Natural killer cell (primary cell): ENCODE measurements at regions of chr1 and their contacts with region 1.

Region 1: GRCh38 chr1:220733090-220733601 is 15.0 kb upstream of the MTARC2 start:
- DNase-seq: peak; percentile 68 to 84
- ATAC-seq: peak; percentile 91 to 97 (median 97)
- H3K4me3 ChIP-seq: no peak overlapping the region
- H3K4me3 Mint-ChIP-seq: peak overlapping the region; percentile 78
- H3K27ac ChIP-seq: no peak overlapping the region
- H3K27ac Mint-ChIP-seq: peak overlapping the region; percentile 24 to 71
- H3K4me1 ChIP-seq: peaks cover 8% of the 10 kb centered on the region
- H3K4me1 Mint-ChIP-seq: peaks cover 9 to 10% of the 10 kb centered on the region in 2 donors
- H3K27me3 ChIP-seq: no peaks in the 10 kb centered on the region
- H3K27me3 Mint-ChIP-seq: peaks cover 5 to 17% of the 10 kb centered on the region in 2 donors
- CTCF ChIP-seq: peak; percentile 78

Region 2: GRCh38 chr1:220217383-220217988 is 515.7 kb before region 1 on chr1:
- intact Hi-C with region 1: loop called (anchors 5 kb)
- DNase-seq: peak in 1 of 2 donors; percentile 21
- ATAC-seq: no peak
- H3K4me3 ChIP-seq: no peak overlapping the region
- H3K4me3 Mint-ChIP-seq: no peak overlapping the region
- H3K27ac ChIP-seq: no peak overlapping the region
- H3K27ac Mint-ChIP-seq: no peak overlapping the region
- H3K4me1 ChIP-seq: no peaks in the 10 kb centered on the region
- H3K4me1 Mint-ChIP-seq: peaks cover 19 to 26% of the 10 kb centered on the region in 2 donors
- H3K27me3 ChIP-seq: no peaks in the 10 kb centered on the region
- H3K27me3 Mint-ChIP-seq: no peaks in the 10 kb centered on the region
- CTCF ChIP-seq: no peak

Region 3: GRCh38 chr1:220294846-220295301 is 438.3 kb before region 1 on chr1:
- intact Hi-C with region 1: loop called (anchors 5 kb)
- DNase-seq: no peak
- ATAC-seq: no peak
- H3K4me3 ChIP-seq: no peak overlapping the region
- H3K4me3 Mint-ChIP-seq: no peak overlapping the region
- H3K27ac ChIP-seq: no peak overlapping the region
- H3K27ac Mint-ChIP-seq: no peak overlapping the region
- H3K4me1 ChIP-seq: no peaks in the 10 kb centered on the region
- H3K4me1 Mint-ChIP-seq: no peaks in the 10 kb centered on the region
- H3K27me3 ChIP-seq: peaks cover 5% of the 10 kb centered on the region
- H3K27me3 Mint-ChIP-seq: peaks cover 28 to 40% of the 10 kb centered on the region in 2 donors
- CTCF ChIP-seq: no peak

Region 4: GRCh38 chr1:220690140-220691025 is 42.8 kb before region 1 on chr1 and contains the start of gene C1orf115:
- intact Hi-C with region 1: loop called (anchors 1 kb)
- DNase-seq: peak; percentile 62 to 79
- ATAC-seq: peak; percentile 94 to 99 (median 98)
- H3K4me3 ChIP-seq: peak within 1 kb of the TSS; percentile 30
- H3K4me3 Mint-ChIP-seq: peak within 1 kb of the TSS; percentile 80
- H3K27ac ChIP-seq: no peak within 1 kb of the TSS
- H3K27ac Mint-ChIP-seq: peak within 1 kb of the TSS in 1 of 2 donors; percentile 70
- H3K4me1 ChIP-seq: peaks cover 11% of the 10 kb centered on the region
- H3K4me1 Mint-ChIP-seq: peaks cover 6 to 9% of the 10 kb centered on the region in 2 donors
- H3K27me3 ChIP-seq: peaks cover 7% of the 10 kb centered on the region
- H3K27me3 Mint-ChIP-seq: peaks cover 11 to 22% of the 10 kb centered on the region in 2 donors
- CTCF ChIP-seq: peak; percentile 82
- total RNA-seq, gene C1orf115: 0.33 to 1.3 (median 0.75) TPM

Region 5: DNA sequence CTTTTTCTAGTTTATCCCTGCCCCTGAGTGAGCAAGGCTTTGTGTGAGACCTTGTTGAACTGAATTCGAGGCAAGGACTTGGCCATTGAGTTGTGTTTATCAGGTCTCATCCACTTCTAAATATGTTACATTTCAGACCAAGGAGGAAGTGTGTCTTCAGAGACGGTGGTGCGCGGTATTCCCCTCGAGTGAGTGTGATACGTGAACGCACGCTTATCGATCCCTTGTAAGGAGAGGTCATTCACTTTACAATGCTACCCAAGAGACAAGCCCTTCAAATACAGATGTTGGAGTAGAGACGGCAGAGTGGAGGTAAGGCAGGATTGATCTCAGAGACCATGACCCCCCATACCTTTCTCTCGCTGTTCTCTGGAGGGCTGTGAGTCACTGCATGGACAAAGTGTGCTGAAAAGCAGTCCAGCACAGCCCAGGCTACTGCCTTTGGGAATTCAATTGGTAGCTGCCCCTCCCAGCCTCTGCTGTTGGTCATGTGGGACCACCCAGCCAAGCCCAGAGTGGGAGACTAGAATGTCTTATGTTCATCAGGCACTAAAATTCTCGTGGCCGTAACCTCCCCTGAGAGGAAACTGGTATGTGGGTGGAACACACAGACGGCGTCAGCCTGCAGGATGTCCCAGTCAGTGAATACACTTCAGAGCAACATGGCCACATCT is 37.2 kb after region 1 on chr1:
- intact Hi-C with region 1: no loop called
- DNase-seq: no peak
- ATAC-seq: no peak
- H3K4me3 ChIP-seq: no peak overlapping the region
- H3K4me3 Mint-ChIP-seq: no peak overlapping the region
- H3K27ac ChIP-seq: peak overlapping the region; percentile 82
- H3K27ac Mint-ChIP-seq: no peak overlapping the region
- H3K4me1 ChIP-seq: no peaks in the 10 kb centered on the region
- H3K4me1 Mint-ChIP-seq: no peaks in the 10 kb centered on the region
- H3K27me3 ChIP-seq: no peaks in the 10 kb centered on the region
- H3K27me3 Mint-ChIP-seq: peaks cover 3 to 5% of the 10 kb centered on the region in 2 donors
- CTCF ChIP-seq: no peak